Activated CD4-positive, alpha-beta memory T cell treated with anti-CD3 and anti-CD28 coated beads for 36 hours (primary cell): ENCODE measurements at regions of chr10 and their contacts with region 1.

Region 1: DNA sequence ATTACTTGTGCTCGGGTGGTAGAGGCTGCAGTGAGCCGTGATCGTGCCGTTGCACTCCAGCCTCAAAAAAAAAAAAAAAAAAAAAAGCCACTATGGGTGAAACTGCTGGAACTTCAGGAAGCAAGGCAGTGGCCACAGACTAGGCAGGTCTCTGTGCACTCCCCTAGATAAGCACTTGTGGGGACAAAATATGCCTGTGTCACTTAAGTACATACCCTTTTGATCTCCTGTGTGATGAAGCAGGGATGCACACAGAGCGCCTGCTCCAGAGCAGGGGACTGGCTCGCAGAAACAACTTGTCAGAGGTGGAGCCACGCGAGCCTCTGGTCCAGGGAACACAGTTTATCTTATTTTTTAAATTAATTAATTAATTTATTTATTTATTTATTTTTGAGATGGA is 42.9 kb upstream of the PSAP start:
- DNase-seq: no peak
- H3K4me3 Mint-ChIP-seq: no peak overlapping the region
- H3K27ac Mint-ChIP-seq: no peak overlapping the region
- H3K4me1 Mint-ChIP-seq: peaks cover 6% of the 10 kb centered on the region
- H3K27me3 Mint-ChIP-seq: peaks cover 16% of the 10 kb centered on the region

Region 2: DNA sequence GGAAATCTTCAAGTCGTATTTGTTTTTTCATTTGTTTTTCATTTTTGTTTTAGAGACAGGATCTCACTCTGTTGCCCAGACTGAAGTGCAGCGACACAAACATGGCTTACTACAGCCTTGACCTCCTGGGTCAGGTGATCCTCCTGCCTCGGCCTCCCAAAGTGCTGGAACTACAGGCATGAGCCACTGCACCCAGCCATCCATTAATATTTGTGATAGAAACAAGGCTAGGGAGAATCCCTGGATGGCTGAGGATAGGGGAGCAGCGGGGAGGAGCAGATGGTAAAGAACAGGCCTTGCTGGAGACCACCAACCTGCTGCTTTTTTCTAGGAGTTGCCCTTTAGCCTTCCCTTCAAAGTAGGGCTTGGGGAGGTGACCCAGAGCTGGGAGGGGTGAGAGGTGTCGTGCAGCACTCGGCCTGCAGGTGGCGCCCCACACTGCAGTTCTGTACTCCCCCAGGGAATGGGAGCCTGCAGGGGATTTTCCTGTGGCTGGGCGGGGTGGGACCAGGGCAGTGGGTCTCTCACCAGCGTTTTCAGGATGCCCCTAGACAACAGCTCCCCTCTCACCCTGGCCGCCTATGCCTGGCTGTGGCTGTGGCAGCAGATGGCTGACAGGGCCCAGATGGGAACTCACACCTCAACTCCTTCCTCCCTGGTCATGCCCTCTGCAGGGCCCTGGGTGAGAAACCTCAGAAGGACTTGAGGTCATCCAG is 509.8 kb before region 1 on chr10:
- CTCF ChIA-PET with region 1: interaction called, 3 read pairs
- POLR2A ChIA-PET with region 1: no interaction called
- intact Hi-C with region 1: loop called (anchors 10 kb)
- DNase-seq: peak; percentile 81
- H3K4me3 Mint-ChIP-seq: no peak overlapping the region
- H3K27ac Mint-ChIP-seq: no peak overlapping the region
- H3K4me1 Mint-ChIP-seq: no peaks in the 10 kb centered on the region
- H3K27me3 Mint-ChIP-seq: peaks cover 1% of the 10 kb centered on the region

Region 3: GRCh38 chr10:71845410-71846405 is 48.2 kb before region 1 on chr10:
- CTCF ChIA-PET with region 1: interaction called, 24 read pairs
- POLR2A ChIA-PET with region 1: no interaction called
- intact Hi-C with region 1: loop called (anchors 2 kb)
- DNase-seq: no peak
- H3K4me3 Mint-ChIP-seq: no peak overlapping the region
- H3K27ac Mint-ChIP-seq: no peak overlapping the region
- H3K4me1 Mint-ChIP-seq: peaks cover 70% of the 10 kb centered on the region
- H3K27me3 Mint-ChIP-seq: no peaks in the 10 kb centered on the region

Region 4: GRCh38 chr10:71905164-71905563 is 11.2 kb after region 1 on chr10:
- CTCF ChIA-PET with region 1: interaction called, 19 read pairs
- POLR2A ChIA-PET with region 1: no interaction called
- intact Hi-C with region 1: no loop called
- DNase-seq: no peak
- H3K4me3 Mint-ChIP-seq: no peak overlapping the region
- H3K27ac Mint-ChIP-seq: no peak overlapping the region
- H3K4me1 Mint-ChIP-seq: no peaks in the 10 kb centered on the region
- H3K27me3 Mint-ChIP-seq: no peaks in the 10 kb centered on the region

Region 5: GRCh38 chr10:71933651-71934050 is 39.7 kb after region 1 on chr10:
- CTCF ChIA-PET with region 1: interaction called, 17 read pairs
- POLR2A ChIA-PET with region 1: no interaction called
- intact Hi-C with region 1: no loop called
- DNase-seq: peak; percentile 80
- H3K4me3 Mint-ChIP-seq: no peak overlapping the region
- H3K27ac Mint-ChIP-seq: no peak overlapping the region
- H3K4me1 Mint-ChIP-seq: peaks cover 20% of the 10 kb centered on the region
- H3K27me3 Mint-ChIP-seq: peaks cover 3% of the 10 kb centered on the region

Region 6: GRCh38 chr10:72026278-72027111 is 132.6 kb after region 1 on chr10:
- CTCF ChIA-PET with region 1: interaction called, 11 read pairs
- POLR2A ChIA-PET with region 1: no interaction called
- intact Hi-C with region 1: no loop called
- DNase-seq: no peak
- H3K4me3 Mint-ChIP-seq: no peak overlapping the region
- H3K27ac Mint-ChIP-seq: no peak overlapping the region
- H3K4me1 Mint-ChIP-seq: peaks cover 3% of the 10 kb centered on the region
- H3K27me3 Mint-ChIP-seq: peaks cover 11% of the 10 kb centered on the region

Region 7: GRCh38 chr10:72337020-72337629 is 443.2 kb after region 1 on chr10:
- CTCF ChIA-PET with region 1: interaction called, 7 read pairs
- POLR2A ChIA-PET with region 1: no interaction called
- intact Hi-C with region 1: loop called (anchors 2 kb)
- DNase-seq: peak; percentile 79
- H3K4me3 Mint-ChIP-seq: no peak overlapping the region
- H3K27ac Mint-ChIP-seq: peak overlapping the region; percentile 99
- H3K4me1 Mint-ChIP-seq: peaks cover 61% of the 10 kb centered on the region
- H3K27me3 Mint-ChIP-seq: no peaks in the 10 kb centered on the region